AG04450 (cell line): ENCODE measurements at regions of chr9 and their contacts with region 1.

Region 1: GRCh38 chr9:71671289-71671688 is 97.0 kb downstream of the CEMIP2 start:
- DNase-seq: no peak
- H3K4me3 ChIP-seq: no peak overlapping the region
- H3K27ac ChIP-seq: no peak overlapping the region
- H3K27me3 ChIP-seq: no peaks in the 10 kb centered on the region
- CTCF ChIP-seq: no peak

Region 2: GRCh38 chr9:71628247-71628646 is 43.0 kb before region 1 on chr9:
- CTCF ChIA-PET with region 1: interaction called, 14 read pairs
- POLR2A ChIA-PET with region 1: no interaction called
- DNase-seq: no peak
- H3K4me3 ChIP-seq: no peak overlapping the region
- H3K27ac ChIP-seq: no peak overlapping the region
- H3K27me3 ChIP-seq: no peaks in the 10 kb centered on the region
- CTCF ChIP-seq: peak; percentile 29; the same call in 1 of the 2 replicates

Region 3: GRCh38 chr9:71690063-71690688 is 18.9 kb after region 1 on chr9:
- CTCF ChIA-PET with region 1: no interaction called
- POLR2A ChIA-PET with region 1: no interaction called
- DNase-seq: no peak
- H3K4me3 ChIP-seq: no peak overlapping the region
- H3K27ac ChIP-seq: no peak overlapping the region
- H3K27me3 ChIP-seq: no peaks in the 10 kb centered on the region
- CTCF ChIP-seq: no peak